Left cardiac atrium (tissue), 4 donors: ENCODE measurements at regions of chr5 and their contacts with region 1.

Region 1: GRCh38 chr5:143824851-143825720 is 13.1 kb downstream of the HMHB1 start:
- DNase-seq: peak; percentile 84
- ATAC-seq: peak; percentile 96 to 97

Region 2: GRCh38 chr5:142922223-142922952 is 902.7 kb before region 1 on chr5:
- intact Hi-C with region 1: loop called in 1 of 2 experiments (anchors 10 kb)
- DNase-seq: no peak
- ATAC-seq: peak; percentile 51 to 59

Region 3: GRCh38 chr5:143002459-143003328 is 822.4 kb before region 1 on chr5:
- intact Hi-C with region 1: loop called in 1 of 2 experiments (anchors 10 kb)
- DNase-seq: peak; percentile 36
- ATAC-seq: peak; percentile 75 to 80

Region 4: DNA sequence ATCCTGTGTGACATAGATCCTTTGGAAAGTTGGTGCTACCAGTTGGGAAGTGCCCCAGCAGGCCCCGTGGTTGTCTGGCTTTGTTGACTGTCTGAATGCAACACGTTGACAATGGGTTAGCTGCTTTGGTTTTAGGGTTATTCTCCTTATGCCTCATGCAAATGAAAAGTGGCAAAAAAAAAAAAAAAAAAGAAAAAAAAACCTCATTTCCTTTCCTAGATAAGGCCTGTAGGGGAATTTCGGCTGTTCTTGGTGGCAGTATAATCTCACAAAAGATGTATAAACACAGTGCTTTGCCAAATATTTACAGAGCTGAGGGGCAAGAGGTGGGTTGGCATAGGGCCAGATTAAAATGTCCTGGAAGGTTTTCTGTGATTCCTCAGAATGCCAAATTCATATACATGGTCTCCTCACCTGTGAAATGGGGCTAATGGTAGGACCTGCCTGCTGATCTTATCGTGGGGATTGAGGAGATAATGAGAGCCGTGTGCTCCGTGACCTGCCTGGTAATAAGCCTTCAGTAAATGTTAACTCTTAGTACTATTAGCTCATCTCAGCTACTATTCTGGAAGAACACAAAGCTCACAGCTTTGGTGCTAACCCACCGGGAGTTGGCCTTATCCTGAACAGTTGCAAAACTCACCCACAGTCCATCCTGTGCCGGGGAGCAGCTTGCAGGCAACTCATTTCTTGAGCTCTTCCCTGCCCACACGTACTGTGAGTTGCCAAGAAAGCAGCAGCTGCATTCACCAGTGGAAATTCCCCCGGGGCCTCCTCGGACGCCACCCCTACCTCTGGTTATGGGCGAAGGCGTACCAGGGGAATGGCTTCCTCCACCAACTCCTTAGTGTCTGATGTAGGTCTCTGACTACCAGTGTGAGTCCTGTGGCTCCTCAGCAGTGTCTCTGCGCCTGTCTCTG is 641.9 kb before region 1 on chr5:
- intact Hi-C with region 1: no loop called
- DNase-seq: peak; percentile 47
- ATAC-seq: peak; percentile 56 to 69

Region 5: DNA sequence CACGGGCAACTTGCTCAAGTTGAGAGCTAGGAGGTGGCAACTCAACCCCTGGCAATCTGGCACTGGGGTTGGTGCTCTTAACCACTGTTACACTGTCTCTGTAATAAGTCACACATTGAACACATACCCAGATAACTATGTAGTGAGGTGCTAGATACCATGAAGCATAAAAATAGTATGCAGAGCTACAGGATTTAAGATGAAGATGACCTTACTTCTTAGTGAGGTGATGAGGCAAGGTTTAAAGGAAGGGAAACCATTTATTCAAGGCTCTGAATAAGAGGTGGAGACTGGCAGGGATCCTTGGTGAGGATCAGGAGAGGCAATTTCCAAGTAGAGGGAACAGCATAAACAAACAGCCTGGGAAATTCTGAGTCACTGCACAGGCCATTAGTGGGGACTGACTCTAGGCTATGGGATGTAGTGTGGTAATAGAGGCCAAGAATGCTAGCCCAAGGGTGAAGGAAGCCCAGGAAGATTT is 354.0 kb before region 1 on chr5:
- intact Hi-C with region 1: no loop called
- DNase-seq: no peak
- ATAC-seq: peak in 1 of 2 donors; percentile 89

Region 6: GRCh38 chr5:143648696-143649095 is 176.4 kb before region 1 on chr5:
- intact Hi-C with region 1: loop called in 1 of 2 experiments (anchors 10 kb)
- DNase-seq: no peak
- ATAC-seq: no peak

Region 7: DNA sequence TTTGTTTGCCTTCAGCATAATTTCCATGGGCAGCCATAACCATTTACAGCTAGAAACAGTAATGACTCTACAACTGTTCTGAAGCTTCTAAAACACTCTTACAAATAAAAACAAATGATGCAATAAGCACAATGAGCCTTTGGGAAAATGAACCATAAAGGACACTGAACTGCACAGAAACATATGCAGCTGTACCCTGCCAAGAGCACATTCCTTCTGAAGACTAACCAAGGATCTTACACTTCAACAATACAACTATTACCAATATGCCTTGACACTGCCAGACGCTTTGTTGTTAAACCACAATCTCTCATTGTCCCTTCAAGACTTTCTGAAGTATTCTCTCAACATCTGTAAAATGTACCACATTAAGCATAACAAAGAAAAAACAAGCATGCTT is 117.3 kb before region 1 on chr5:
- intact Hi-C with region 1: loop called in 1 of 2 experiments (anchors 10 kb)
- DNase-seq: no peak
- ATAC-seq: no peak